H1 (cell line): ENCODE measurements at regions of chr11 and their contacts with region 1.

Region 1: GRCh38 chr11:59207988-59208451 is 4.7 kb downstream of the MPEG1 start:
- DNase-seq: no peak
- H3K4me3 ChIP-seq: no peak overlapping the region
- H3K27ac ChIP-seq: no peak overlapping the region
- H3K4me1 ChIP-seq: peaks cover 0 to 2% (median 0%) of the 10 kb centered on the region in 4 experiments; a peak in 1 of 7 replicates
- H3K27me3 ChIP-seq: no peaks in the 10 kb centered on the region
- CTCF ChIP-seq: peak in 2 of 3 experiments; percentile 64 to 67; a peak in 3 of 4 replicates
- EP300 ChIP-seq: no peak
- POLR2A ChIP-seq: no peak
- RAD21 ChIP-seq: peak; percentile 68 to 69

Region 2: GRCh38 chr11:59186130-59186594 is 21.9 kb before region 1 on chr11:
- CTCF ChIA-PET with region 1: interaction called, 141 read pairs
- POLR2A ChIA-PET with region 1: interaction called, 3 read pairs
- DNase-seq: peak in 1 of 2 experiments; percentile 82
- H3K4me3 ChIP-seq: no peak overlapping the region
- H3K27ac ChIP-seq: no peak overlapping the region
- H3K4me1 ChIP-seq: peaks cover 0 to 4% (median 0%) of the 10 kb centered on the region in 4 experiments; a peak in 2 of 7 replicates
- H3K27me3 ChIP-seq: no peaks in the 10 kb centered on the region
- CTCF ChIP-seq: peak; percentile 65 to 73 (median 72)
- EP300 ChIP-seq: no peak
- POLR2A ChIP-seq: no peak
- RAD21 ChIP-seq: peak; percentile 33 to 39; a peak in 3 of 4 replicates

Region 3: DNA sequence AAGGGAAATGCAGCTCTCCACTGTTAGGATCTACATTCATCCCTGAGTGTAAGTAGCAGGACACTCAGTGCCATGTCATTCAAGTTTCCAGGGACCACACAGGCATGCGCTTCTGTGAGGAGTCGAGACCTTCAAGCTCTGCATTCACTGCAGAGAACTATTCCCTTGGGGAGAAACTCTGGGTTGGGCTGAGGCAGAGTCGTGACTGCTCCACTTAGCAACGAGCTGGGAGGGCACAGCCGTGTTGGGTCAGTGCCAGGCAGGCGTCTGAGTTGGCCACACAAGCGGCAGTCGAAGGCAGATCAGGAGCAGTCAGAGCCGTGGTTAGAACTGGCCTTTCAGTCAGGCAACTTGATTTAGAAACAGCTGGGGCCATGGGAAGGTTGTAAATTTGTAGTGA is 10.0 kb before region 1 on chr11:
- CTCF ChIA-PET with region 1: interaction called, 19 read pairs
- POLR2A ChIA-PET with region 1: no interaction called
- DNase-seq: no peak
- H3K4me3 ChIP-seq: no peak overlapping the region
- H3K27ac ChIP-seq: no peak overlapping the region
- H3K4me1 ChIP-seq: no peaks in the 10 kb centered on the region; a peak in 1 of 7 replicates
- H3K27me3 ChIP-seq: no peaks in the 10 kb centered on the region
- CTCF ChIP-seq: no peak
- EP300 ChIP-seq: no peak
- POLR2A ChIP-seq: no peak
- RAD21 ChIP-seq: no peak

Region 4: GRCh38 chr11:59224351-59224928 is 16.4 kb after region 1 on chr11:
- CTCF ChIA-PET with region 1: interaction called, 25 read pairs
- POLR2A ChIA-PET with region 1: no interaction called
- DNase-seq: no peak
- H3K4me3 ChIP-seq: no peak overlapping the region
- H3K27ac ChIP-seq: no peak overlapping the region
- H3K4me1 ChIP-seq: no peaks in the 10 kb centered on the region
- H3K27me3 ChIP-seq: no peaks in the 10 kb centered on the region
- CTCF ChIP-seq: no peak
- EP300 ChIP-seq: no peak
- POLR2A ChIP-seq: no peak
- RAD21 ChIP-seq: no peak

Region 5: DNA sequence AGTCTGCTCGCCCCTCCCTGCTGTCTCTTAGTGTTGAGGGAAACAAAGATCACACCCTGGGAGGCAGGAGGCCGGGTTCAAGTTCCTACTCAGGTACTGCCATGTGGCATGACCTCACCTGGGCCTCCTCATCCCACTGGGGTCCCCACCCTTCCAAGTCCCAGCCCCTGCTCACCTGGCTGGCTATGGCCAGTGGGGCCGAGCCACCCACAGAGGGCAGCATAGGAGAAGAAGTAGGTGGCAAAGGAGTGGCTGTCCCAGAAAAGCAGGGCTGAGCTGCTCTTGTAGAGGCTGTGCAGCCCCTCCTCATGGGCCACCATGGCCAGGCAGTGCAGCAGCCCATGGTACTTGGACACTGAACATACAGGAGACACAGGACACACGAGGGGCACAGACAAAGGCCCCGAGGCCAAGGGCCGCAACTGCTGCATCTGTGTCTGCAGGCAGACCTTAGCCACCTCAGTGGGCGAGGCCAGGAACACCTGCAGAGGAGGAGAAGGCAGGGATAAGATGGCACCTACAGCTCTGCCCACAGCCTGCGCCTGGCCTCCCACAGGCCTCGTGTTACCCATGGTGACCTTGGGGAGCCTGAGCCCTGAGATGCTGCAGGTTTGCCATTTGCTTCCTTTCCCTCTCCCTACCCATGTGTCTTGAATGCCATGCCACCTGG is 55.3 kb after region 1 on chr11:
- CTCF ChIA-PET with region 1: interaction called, 16 read pairs
- POLR2A ChIA-PET with region 1: no interaction called
- DNase-seq: peak in 1 of 2 experiments; percentile 82
- H3K4me3 ChIP-seq: no peak overlapping the region
- H3K27ac ChIP-seq: no peak overlapping the region
- H3K4me1 ChIP-seq: no peaks in the 10 kb centered on the region
- H3K27me3 ChIP-seq: no peaks in the 10 kb centered on the region
- CTCF ChIP-seq: peak; percentile 70 to 75 (median 72)
- EP300 ChIP-seq: no peak
- POLR2A ChIP-seq: no peak
- RAD21 ChIP-seq: peak; percentile 83 to 90

Region 6: GRCh38 chr11:59429924-59430516 is 222.0 kb after region 1 on chr11:
- CTCF ChIA-PET with region 1: interaction called, 26 read pairs
- POLR2A ChIA-PET with region 1: no interaction called
- DNase-seq: peak in 1 of 2 experiments; percentile 48
- H3K4me3 ChIP-seq: no peak overlapping the region
- H3K27ac ChIP-seq: no peak overlapping the region
- H3K4me1 ChIP-seq: peaks cover 3 to 5% (median 4%) of the 10 kb centered on the region in 4 experiments; a peak in 6 of 7 replicates
- H3K27me3 ChIP-seq: no peaks in the 10 kb centered on the region
- CTCF ChIP-seq: peak in 2 of 3 experiments; percentile 66 to 84; a peak in 2 of 4 replicates
- EP300 ChIP-seq: no peak
- POLR2A ChIP-seq: no peak
- RAD21 ChIP-seq: peak; percentile 92